ENCODE measurements at regions of chr4 and their contacts with region 1.

Region 1: DNA sequence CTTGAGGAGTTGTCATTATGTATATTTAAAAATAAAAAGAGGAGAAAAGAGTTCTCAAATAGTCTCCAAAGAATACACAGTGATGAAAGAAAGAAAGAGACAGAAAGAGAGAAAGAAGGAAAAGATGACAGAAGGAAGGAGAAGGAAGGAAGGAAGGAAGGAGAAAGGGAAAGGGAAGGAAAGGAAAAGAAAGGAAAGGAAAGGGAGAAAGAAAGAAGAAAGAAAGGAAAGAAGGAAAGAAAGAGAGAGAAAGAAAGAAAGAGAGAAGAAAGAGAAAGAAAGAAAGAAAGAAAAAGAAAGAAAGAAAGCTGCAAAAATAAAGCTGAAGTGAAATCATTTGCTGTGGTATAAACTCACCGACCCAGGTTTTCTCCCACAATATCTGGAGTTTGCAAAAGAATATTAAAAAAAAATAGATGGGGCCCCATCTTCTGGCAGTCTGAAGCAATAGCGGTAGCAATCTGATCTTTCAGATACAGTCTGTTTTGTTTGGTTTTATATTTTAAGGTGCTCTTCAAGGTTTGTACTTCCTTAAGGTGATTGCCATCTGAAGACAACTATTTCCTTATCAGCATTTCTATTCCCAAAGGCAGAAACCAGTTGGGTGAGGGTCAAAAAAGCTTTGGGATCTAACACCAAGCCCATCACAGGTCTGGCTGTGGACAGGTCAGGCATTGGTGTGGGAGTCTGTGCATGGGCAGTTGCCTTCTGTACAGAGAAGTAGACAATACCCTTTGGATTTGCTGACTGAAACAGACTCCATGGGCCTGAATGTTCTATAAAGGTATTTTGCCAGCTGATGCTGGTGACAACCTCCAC is 160.4 kb downstream of the CPEB2 start:
- DNase-seq: no peak
- H3K4me3 ChIP-seq: no peak overlapping the region
- H3K27ac ChIP-seq: no peak overlapping the region
- H3K4me1 ChIP-seq: no peaks in the 10 kb centered on the region
- H3K27me3 ChIP-seq: no peaks in the 10 kb centered on the region
- CTCF ChIP-seq: peak in 2 of 4 experiments; percentile 18 to 46
- EP300 ChIP-seq: no peak
- POLR2A ChIP-seq: no peak

Region 2: GRCh38 chr4:13654158-13654797 is 1508.4 kb before region 1 on chr4:
- intact Hi-C with region 1: loop called (anchors 5 kb)
- DNase-seq: peak; percentile 86
- H3K4me3 ChIP-seq: peak overlapping the region; percentile 26 to 53 (median 44)
- H3K27ac ChIP-seq: peak overlapping the region in 2 of 4 donors; percentile 38 to 40
- H3K4me1 ChIP-seq: peaks cover 0 to 15% (median 3%) of the 10 kb centered on the region in 4 donors
- H3K27me3 ChIP-seq: no peaks in the 10 kb centered on the region
- CTCF ChIP-seq: peak; percentile 45 to 85 (median 58)
- EP300 ChIP-seq: no peak
- POLR2A ChIP-seq: no peak

Region 3: DNA sequence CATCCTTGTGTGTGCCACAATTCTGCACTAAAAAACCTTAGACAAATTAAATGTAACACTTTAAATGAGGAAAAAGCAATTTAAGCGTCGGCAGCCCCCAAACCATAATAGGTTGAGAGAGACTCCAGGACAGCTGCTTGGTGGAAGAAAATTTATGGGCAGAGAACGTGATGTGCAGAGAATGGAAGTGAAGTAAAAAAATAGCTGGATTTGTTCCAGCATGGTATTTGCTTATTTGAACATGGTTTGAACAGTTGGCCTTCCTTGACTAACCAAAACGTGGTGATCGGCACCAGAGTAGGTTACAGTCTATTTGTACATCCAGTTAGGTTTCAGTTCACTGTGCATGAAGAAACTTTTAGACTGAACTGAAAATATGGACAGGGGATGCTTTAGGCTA is 503.4 kb before region 1 on chr4:
- intact Hi-C with region 1: no loop called
- DNase-seq: no peak
- H3K4me3 ChIP-seq: no peak overlapping the region
- H3K27ac ChIP-seq: no peak overlapping the region
- H3K4me1 ChIP-seq: no peaks in the 10 kb centered on the region
- H3K27me3 ChIP-seq: no peaks in the 10 kb centered on the region
- CTCF ChIP-seq: no peak
- EP300 ChIP-seq: no peak
- POLR2A ChIP-seq: no peak

Region 4: DNA sequence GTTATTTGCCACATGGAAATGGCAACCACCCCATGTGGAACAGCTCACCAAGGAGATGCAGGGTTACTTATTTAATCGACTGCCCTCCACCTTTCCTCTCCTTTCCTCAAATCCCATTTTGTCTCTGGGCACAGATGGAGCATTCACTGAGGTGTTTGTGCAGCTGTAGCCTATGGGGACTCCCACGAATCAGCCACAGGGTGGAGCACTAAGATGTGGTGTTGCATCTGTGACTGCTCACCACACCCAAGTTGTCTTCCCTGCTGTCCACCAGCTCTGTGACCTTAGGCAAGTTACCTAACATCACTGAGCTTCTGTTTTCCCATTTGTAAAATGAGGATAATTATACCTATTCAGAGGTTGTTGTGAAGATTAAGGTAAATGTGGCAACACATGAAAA is 412.8 kb before region 1 on chr4:
- intact Hi-C with region 1: loop called (anchors 10 kb)
- DNase-seq: peak; percentile 71
- H3K4me3 ChIP-seq: no peak overlapping the region
- H3K27ac ChIP-seq: no peak overlapping the region
- H3K4me1 ChIP-seq: no peaks in the 10 kb centered on the region
- H3K27me3 ChIP-seq: no peaks in the 10 kb centered on the region
- CTCF ChIP-seq: peak; percentile 23 to 45 (median 36)
- EP300 ChIP-seq: no peak
- POLR2A ChIP-seq: no peak

Region 5: DNA sequence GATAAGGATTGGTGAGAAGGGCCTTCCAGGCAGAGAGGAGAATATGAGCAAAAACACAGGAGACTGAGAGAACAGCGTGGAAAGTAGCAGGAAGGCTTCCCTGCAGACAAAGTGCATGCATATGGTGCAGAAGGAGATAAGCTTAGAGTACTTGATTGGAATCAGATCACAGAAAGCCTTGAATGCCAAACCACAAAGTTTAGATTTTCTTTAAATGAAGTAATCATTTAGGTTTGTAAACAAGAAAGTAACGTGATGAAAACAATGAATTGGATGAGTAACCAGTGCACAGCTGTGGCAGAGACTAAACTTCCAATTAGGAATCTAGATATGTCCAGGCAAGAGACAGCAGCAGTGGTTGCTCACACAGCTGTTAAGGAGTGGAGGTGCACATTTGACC is 181.4 kb after region 1 on chr4:
- intact Hi-C with region 1: no loop called
- DNase-seq: no peak
- H3K4me3 ChIP-seq: no peak overlapping the region
- H3K27ac ChIP-seq: peak overlapping the region in 1 of 4 donors; percentile 27
- H3K4me1 ChIP-seq: peaks cover 0 to 46% (median 38%) of the 10 kb centered on the region in 4 donors
- H3K27me3 ChIP-seq: no peaks in the 10 kb centered on the region
- CTCF ChIP-seq: no peak
- EP300 ChIP-seq: no peak
- POLR2A ChIP-seq: no peak